PC-9 (cell line): ENCODE measurements at regions of chr7 and their contacts with region 1.

Region 1: DNA sequence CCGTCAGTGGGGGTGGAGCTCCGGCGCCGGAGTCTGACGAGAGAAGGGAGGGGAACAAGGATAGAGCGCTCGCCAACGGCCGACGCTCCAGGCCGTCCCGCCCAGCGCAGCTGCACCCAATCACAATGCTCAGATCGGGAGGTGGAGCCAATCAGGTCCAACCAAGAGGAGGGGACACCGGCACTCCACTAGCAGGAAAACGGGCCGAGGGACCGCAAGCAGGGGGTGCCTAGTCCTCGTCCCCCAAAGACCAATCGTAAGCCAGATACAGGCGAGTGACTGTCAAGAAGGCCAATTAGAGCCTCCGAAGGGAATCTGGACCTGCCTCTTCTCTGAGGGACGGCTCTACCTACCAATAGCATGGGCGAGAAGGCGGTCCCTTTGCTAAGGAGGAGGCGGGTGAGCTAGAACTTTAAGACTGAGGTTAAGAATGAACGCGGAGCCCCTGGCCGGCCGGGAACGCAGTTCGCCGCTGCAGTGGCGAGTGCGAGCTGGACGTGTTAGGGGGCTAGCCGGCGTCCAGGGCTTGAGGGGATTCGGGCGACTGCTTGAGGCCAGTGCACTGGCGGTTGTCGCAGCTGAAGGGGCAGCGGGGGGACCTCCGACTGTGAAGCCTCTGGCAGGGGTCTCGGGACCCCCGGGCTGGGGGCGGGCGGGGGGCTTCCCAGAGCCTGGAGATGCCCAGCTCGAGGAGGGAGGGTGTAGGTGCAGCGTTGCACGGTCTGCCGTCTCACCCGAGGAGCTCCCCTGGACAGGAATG is at the start of gene FBXO24:
- DNase-seq: peak; percentile 99 to 100
- H3K4me3 ChIP-seq: peak within 1 kb of the TSS; percentile 60
- H3K27ac ChIP-seq: peak within 1 kb of the TSS; percentile 75
- H3K4me1 ChIP-seq: peaks cover 19% of the 10 kb centered on the region
- H3K27me3 ChIP-seq: no peaks in the 10 kb centered on the region
- CTCF ChIP-seq: no peak
- total RNA-seq, gene FBXO24: 2.7 and 4.6 TPM in 2 replicates

Region 2: GRCh38 chr7:100538654-100539435 is 47.6 kb before region 1 on chr7 and contains the start of gene AGFG2:
- CTCF ChIA-PET with region 1: interaction called, 3 read pairs
- POLR2A ChIA-PET with region 1: interaction called, 9 read pairs
- intact Hi-C with region 1: loop called (anchors 2 kb)
- DNase-seq: peak; percentile 99 to 100
- H3K4me3 ChIP-seq: peak within 1 kb of the TSS; percentile 79
- H3K27ac ChIP-seq: peak within 1 kb of the TSS; percentile 42
- H3K4me1 ChIP-seq: peaks cover 44% of the 10 kb centered on the region
- H3K27me3 ChIP-seq: no peaks in the 10 kb centered on the region
- CTCF ChIP-seq: no peak
- total RNA-seq, gene AGFG2: 30.4 and 35.2 TPM in 2 replicates

Region 3: DNA sequence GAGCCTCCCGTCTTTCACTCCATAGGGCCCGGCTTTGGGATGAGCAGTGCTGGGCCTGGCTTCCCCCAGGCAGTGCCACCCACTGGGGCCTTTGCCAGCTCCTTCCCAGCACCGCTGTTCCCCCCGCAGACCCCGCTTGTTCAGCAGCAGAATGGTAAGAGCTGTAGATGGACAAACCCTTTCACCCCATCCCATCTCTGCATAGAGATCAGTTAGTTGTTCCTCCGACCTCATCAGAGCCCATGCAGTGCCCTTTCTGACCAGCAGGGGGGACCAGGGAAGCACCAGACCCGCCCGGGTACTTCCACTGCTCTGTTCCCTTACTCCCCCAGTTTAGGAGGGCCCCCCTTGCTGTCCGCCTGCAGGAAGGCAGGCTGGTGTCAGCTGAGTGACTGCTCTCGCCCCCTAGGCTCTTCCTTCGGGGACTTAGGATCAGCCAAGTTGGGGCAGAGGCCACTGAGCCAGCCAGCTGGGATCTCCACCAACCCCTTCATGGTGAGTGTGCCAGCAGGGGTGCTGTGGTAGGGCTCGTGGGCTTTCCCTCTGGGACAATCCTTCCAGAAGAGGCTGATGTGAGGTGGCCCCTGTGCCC is 22.5 kb before region 1 on chr7:
- CTCF ChIA-PET with region 1: interaction called, 11 read pairs
- POLR2A ChIA-PET with region 1: interaction called, 18 read pairs
- intact Hi-C with region 1: loop called (anchors 1 kb)
- DNase-seq: peak in 1 of 2 experiments; percentile 80
- H3K4me3 ChIP-seq: no peak overlapping the region
- H3K27ac ChIP-seq: no peak overlapping the region
- H3K4me1 ChIP-seq: 0 out of 2 replicates have a peak, but pooled peaks cover 8% of the 10 kb centered on the region
- H3K27me3 ChIP-seq: no peaks in the 10 kb centered on the region
- CTCF ChIP-seq: peak; percentile 96

Region 4: DNA sequence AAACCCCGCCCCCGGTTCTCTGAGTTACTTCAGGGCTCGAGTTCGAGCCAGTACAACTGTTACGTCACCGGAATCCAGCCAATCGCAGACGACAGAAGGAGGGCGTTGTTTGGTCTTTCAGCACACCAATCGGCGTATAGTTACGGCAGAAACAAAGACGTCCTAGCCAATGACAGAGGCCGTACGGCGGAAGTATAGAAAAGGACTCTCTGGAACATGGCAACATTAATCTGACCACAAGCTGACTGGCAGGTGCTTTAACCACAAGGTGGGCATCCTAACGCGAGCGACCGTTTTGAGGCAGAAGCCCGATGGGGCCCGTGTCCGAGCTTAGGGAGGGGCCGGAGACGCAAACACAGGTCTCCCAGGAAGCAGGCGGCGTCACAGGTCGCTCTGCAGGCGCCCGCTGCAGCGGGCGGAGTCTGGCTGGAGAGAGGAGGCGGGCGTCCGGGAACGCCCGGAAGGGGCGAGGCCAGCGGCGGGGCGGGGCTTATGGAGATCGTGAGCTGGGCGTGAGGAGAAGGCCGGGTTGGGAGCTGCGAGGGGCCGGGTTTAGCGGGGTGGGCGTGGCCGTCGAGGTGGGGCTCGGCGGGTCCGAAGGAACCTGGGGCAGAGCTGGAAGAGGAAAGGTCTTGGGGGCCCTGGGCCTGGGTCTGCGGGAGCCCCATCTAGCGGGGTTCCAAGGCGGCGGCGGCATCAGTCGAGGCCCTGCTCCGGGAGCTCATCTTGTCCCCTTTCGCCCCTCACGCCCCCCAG is 25.7 kb after region 1 on chr7 and contains the start of gene MOSPD3:
- CTCF ChIA-PET with region 1: interaction called, 12 read pairs
- POLR2A ChIA-PET with region 1: interaction called, 23 read pairs
- intact Hi-C with region 1: loop called (anchors 1 kb)
- DNase-seq: peak; percentile 98 to 99
- H3K4me3 ChIP-seq: peak within 1 kb of the TSS; percentile 74
- H3K27ac ChIP-seq: peak within 1 kb of the TSS; percentile 60
- H3K4me1 ChIP-seq: peaks cover 5% of the 10 kb centered on the region
- H3K27me3 ChIP-seq: no peaks in the 10 kb centered on the region
- CTCF ChIP-seq: no peak
- total RNA-seq, gene MOSPD3: 38.1 and 38.8 TPM in 2 replicates

Region 5: DNA sequence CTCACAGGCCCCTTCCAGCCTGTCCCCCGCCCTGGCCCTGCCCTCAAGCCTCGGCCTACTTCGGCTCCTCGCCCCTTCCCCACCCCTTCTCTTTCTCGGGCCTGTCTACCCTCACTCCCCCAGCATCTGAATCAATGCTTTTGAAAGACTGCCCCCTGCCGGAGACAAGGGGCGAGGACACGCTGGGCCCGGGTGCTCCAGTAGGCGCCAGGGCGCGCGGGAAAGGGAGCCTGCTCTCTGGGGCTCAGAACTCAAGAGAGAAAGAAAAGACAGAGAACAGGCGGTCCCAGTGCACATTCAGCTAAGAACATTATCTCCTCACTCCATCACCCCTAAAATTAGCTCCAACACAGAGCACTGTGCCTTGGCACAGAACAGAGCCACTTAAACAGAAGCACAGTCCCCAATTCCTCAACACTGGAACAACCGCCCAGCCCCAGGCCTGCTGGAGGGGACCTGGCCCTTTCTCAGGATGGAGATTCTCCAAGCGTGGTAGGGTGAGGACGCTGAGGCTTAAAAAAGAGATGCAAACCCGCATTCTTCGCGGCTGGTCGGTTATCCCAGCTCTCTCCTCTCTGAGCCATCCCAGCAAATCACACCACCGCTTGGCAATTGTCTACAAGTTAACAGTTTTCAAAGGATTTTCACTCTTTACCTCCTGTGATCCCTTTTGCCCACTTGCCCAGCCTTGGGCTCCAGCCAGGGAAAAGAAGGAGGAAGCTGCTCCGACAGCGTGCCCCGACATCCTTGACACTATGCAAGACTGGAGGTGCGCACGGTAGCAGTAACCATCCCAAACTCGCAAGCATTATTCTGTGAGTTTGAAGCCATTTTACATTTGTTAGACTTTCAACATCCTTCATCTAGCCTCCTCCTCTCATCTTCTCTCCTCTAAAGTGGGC is 105.5 kb after region 1 on chr7:
- CTCF ChIA-PET with region 1: interaction called, 4 read pairs
- POLR2A ChIA-PET with region 1: interaction called, 4 read pairs
- intact Hi-C with region 1: loop called (anchors 5 kb)
- DNase-seq: peak in 1 of 2 experiments; percentile 72
- H3K4me3 ChIP-seq: peak overlapping the region; percentile 97; the same call in 1 of the 2 replicates
- H3K27ac ChIP-seq: no peak overlapping the region
- H3K4me1 ChIP-seq: peaks cover 13% of the 10 kb centered on the region
- H3K27me3 ChIP-seq: no peaks in the 10 kb centered on the region
- CTCF ChIP-seq: peak; percentile 95

Region 6: DNA sequence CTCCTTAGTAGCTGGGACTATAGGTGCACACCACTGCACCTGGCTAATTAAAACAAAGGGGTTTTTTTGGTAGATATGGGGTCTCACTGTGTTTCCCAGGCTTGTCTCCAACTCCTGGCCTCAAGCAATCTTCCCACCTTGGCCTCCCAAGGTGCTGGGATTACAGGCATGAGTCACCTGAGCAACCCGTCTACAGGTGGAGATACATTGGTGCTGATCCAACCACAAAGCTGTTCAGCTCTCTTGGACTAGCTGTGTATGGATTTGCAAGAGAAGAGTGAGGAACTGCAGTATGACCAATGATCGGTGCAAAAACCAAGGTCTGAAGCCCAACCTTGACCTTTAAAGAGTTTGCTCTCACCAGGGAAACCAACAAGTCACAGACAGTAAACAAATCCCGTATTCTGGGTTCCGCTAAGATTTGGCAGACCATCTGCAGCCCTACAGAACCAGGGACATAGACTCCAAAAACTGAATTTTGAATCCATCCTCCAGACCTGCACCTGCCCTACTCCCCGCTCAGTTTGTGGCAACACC is 222.0 kb after region 1 on chr7:
- CTCF ChIA-PET with region 1: no interaction called
- POLR2A ChIA-PET with region 1: no interaction called
- intact Hi-C with region 1: no loop called
- DNase-seq: no peak
- H3K4me3 ChIP-seq: no peak overlapping the region
- H3K27ac ChIP-seq: no peak overlapping the region
- H3K4me1 ChIP-seq: peaks cover 6% of the 10 kb centered on the region
- H3K27me3 ChIP-seq: no peaks in the 10 kb centered on the region
- CTCF ChIP-seq: no peak

Region 7: DNA sequence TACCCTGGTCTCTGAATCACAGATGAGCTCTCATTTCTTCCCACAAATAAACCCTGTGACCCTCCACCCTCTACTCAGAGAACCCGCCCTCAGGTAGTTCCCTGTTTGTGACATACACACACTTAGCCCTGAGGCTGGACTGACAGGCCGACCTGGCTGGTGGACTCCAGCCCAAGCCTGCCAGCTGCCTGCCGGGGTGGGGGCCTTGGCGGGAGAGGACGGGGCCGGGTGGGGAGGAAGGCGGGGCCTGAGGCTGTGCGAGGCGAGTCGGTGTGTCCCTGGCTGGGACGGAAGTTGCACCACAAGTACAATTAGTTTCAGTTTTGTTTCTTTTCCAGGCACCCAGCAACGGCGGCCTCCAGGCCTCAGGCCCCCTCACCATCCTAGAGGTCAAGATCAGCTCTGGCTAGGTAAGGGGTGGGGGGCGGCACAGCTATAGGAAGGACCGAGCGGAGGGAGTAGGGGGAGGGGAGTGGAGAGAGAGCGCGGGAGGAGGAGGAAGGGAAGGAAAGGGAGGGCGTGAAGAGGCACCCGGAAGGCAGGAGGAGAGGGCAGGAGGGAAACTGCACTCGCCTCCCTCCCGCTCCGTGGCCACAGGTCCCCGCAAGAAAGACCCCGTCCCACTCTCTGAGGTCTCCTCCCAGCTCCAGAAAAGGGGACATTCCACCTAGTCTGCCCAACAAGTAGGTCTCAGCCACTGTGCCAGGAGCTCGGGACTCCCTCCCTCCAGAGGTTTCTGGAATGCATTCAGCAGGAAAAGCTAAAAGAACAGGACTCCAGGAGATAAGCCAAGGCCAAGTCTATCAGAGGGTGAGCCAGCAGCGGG is 498.9 kb after region 1 on chr7 and contains the start of gene TRIM56:
- CTCF ChIA-PET with region 1: no interaction called
- POLR2A ChIA-PET with region 1: no interaction called
- intact Hi-C with region 1: loop called (anchors 10 kb)
- DNase-seq: peak; percentile 98 to 99
- H3K4me3 ChIP-seq: peak within 1 kb of the TSS; percentile 88
- H3K27ac ChIP-seq: peak within 1 kb of the TSS; percentile 88
- H3K4me1 ChIP-seq: peaks cover 39% of the 10 kb centered on the region
- H3K27me3 ChIP-seq: no peaks in the 10 kb centered on the region
- CTCF ChIP-seq: no peak
- total RNA-seq, gene TRIM56: 72.3 and 81.6 TPM in 2 replicates